Esophagus squamous epithelium (tissue), 5 donors: ENCODE measurements at regions of chr11 and their contacts with region 1.

Region 1: GRCh38 chr11:82900277-82901164 is at the start of gene PRCP:
- DNase-seq: peak; percentile 54
- H3K4me3 ChIP-seq: peak within 1 kb of the TSS; percentile 62 to 82 (median 74)
- H3K27ac ChIP-seq: peak within 1 kb of the TSS; percentile 90 to 97 (median 97)
- H3K4me1 ChIP-seq: peaks cover 19 to 76% (median 24%) of the 10 kb centered on the region in 3 donors
- H3K27me3 ChIP-seq: no peaks in the 10 kb centered on the region
- CTCF ChIP-seq: peak in 3 of 6 experiments; percentile 1 to 14 (median 12)
- POLR2A ChIP-seq: peak in 3 of 4 donors; percentile 29 to 88 (median 73)
- total RNA-seq, gene PRCP: 39.6 to 82.4 (median 50.3) TPM

Region 2: DNA sequence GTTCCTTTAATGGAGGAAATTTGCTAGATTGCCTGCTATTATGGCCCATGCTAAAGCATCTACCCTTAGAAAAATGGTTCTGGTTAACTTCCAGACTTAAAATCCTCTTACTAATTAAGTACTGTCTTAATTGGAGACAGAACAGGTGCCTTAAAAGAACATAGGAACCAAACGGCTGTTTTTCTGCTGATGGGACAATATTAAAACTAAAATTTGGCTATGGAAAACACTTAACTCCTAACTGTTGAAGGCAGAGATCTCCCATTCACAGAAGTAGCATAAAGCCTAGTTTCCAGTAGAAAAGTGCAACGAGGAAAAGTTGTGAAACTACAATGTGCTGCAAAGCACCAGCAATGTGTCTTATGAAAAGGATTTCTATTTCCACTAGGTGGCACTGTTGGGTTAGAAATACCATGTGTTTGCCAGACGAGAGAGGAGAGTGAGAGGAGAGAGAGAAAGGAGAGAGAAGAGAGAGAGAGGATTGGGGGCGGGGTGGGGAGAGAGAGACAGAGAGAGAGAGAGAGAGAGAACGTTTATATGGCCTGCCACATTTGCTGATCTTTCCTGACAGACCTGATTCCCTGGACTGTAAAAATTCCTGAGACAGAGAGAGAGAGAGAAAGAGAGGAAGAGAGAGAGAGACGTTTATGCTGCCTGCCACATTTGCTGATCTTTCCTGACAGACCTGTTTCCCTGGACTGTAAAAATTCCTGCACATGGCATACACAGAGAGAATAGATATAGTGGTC is 218.3 kb before region 1 on chr11:
- intact Hi-C with region 1: no loop called
- DNase-seq: no peak
- H3K4me3 ChIP-seq: no peak overlapping the region
- H3K27ac ChIP-seq: no peak overlapping the region
- H3K4me1 ChIP-seq: peaks cover 0 to 6% (median 2%) of the 10 kb centered on the region in 3 donors
- H3K27me3 ChIP-seq: peaks cover 0 to 11% (median 0%) of the 10 kb centered on the region in 4 donors
- CTCF ChIP-seq: peak; percentile 41 to 69 (median 54)
- POLR2A ChIP-seq: no peak

Region 3: GRCh38 chr11:83272627-83273026 is 372.1 kb after region 1 on chr11:
- intact Hi-C with region 1: loop called (anchors 10 kb)
- DNase-seq: no peak
- H3K4me3 ChIP-seq: no peak overlapping the region
- H3K27ac ChIP-seq: peak overlapping the region in 1 of 4 donors; percentile 1
- H3K4me1 ChIP-seq: no peaks in the 10 kb centered on the region
- H3K27me3 ChIP-seq: no peaks in the 10 kb centered on the region
- CTCF ChIP-seq: no peak
- POLR2A ChIP-seq: no peak